Heart right ventricle (tissue), 16 donors: ENCODE measurements at regions of chr7 and their contacts with region 1.

Region 1: GRCh38 chr7:41375582-41375981 is 327.3 kb downstream of the INHBA start:
- DNase-seq: no peak
- ATAC-seq: no peak
- H3K4me3 ChIP-seq: no peak overlapping the region
- H3K27ac ChIP-seq: no peak overlapping the region
- H3K4me1 ChIP-seq: no peaks in the 10 kb centered on the region
- H3K27me3 ChIP-seq: no peaks in the 10 kb centered on the region
- CTCF ChIP-seq: no peak

Region 2: GRCh38 chr7:41027428-41028115 is 348.0 kb before region 1 on chr7:
- intact Hi-C with region 1: no loop called
- DNase-seq: no peak
- ATAC-seq: no peak
- H3K4me3 ChIP-seq: no peak overlapping the region
- H3K27ac ChIP-seq: no peak overlapping the region
- H3K4me1 ChIP-seq: no peaks in the 10 kb centered on the region
- H3K27me3 ChIP-seq: no peaks in the 10 kb centered on the region
- CTCF ChIP-seq: no peak

Region 3: DNA sequence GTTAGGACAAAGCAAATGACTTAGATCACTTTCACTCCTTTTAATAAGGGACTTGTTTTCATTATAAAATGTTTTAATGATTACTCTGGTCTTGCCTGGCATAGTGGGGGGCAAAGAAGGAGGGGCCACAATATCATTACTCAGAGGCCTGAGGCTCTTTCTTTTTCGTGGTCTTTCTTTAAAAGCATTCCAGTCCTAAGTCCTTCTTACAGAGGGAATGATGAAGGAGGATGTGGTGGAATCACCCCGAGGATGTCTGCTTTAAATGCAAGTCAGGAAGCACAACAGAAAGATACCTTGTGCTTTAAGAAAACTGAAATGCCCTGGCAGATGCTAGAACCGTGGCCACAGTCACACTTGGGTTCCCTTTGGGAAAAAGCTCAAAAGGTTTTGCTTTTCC is 51.8 kb before region 1 on chr7:
- intact Hi-C with region 1: no loop called
- DNase-seq: no peak
- ATAC-seq: no peak
- H3K4me3 ChIP-seq: no peak overlapping the region
- H3K27ac ChIP-seq: no peak overlapping the region
- H3K4me1 ChIP-seq: no peaks in the 10 kb centered on the region
- H3K27me3 ChIP-seq: no peaks in the 10 kb centered on the region
- CTCF ChIP-seq: no peak

Region 4: GRCh38 chr7:41954976-41955375 is 579.4 kb after region 1 on chr7:
- intact Hi-C with region 1: loop called in 1 of 10 experiments (anchors 5 kb)
- DNase-seq: no peak
- ATAC-seq: no peak
- H3K4me3 ChIP-seq: no peak overlapping the region
- H3K27ac ChIP-seq: no peak overlapping the region
- H3K4me1 ChIP-seq: peaks cover 5 to 29% (median 24%) of the 10 kb centered on the region in 9 donors
- H3K27me3 ChIP-seq: peaks cover 0 to 33% (median 18%) of the 10 kb centered on the region in 7 donors
- CTCF ChIP-seq: no peak